ENCODE measurements at regions of chr10 and their contacts with region 1.

Region 1: DNA sequence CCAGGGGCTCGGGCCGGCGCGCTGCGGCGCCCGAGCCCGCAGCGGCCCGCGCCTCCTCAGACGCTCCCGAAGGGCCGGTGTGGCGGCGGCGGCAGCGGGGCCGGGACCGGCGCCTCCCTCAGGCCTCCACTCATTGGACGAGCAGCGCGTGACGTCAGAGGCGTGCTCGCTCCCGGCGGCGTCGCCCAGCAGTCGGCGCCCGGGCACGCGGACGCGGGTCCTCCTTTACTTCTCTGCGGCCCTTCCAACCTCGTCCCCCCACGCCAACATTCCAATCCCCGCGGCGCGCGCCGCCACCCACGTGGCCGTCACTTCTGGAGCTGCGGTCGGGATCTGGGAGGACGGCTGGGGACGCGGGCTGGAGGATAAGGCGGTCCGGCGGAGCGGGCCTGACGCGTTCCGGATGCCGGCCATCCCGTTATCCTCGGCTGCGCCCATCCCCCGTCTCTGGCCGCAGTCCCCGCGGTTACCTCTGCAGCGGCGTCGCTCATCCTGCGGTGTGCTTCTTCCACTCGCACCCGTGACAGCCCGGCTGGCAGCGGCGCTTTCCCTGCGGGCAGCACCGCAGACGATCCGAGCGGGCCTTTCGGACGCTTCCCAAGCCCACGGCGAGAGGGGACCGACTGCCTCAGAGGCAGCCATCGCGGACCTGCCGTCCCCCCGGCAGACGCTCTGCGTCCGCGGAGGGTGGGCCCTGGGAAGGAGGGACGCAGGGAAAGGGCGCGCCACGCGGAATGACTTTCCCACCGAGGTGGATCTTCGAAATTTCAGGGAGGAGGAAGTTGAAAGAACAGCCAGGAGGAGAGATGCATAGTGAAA is at the start of gene PDZD8:
- DNase-seq: peak; percentile 84
- H3K4me3 Mint-ChIP-seq: peak within 1 kb of the TSS; percentile 90
- H3K27ac Mint-ChIP-seq: peak within 1 kb of the TSS; percentile 76
- H3K4me1 Mint-ChIP-seq: peaks cover 21% of the 10 kb centered on the region
- H3K27me3 Mint-ChIP-seq: peaks cover 38% of the 10 kb centered on the region
- total RNA-seq, gene PDZD8: 20.6 and 22.0 TPM in 2 replicates

Region 2: GRCh38 chr10:117312430-117312829 is 63.1 kb before region 1 on chr10:
- intact Hi-C with region 1: no loop called
- DNase-seq: no peak
- H3K4me3 Mint-ChIP-seq: no peak overlapping the region
- H3K27ac Mint-ChIP-seq: no peak overlapping the region
- H3K4me1 Mint-ChIP-seq: peaks cover 9% of the 10 kb centered on the region
- H3K27me3 Mint-ChIP-seq: no peaks in the 10 kb centered on the region

Region 3: DNA sequence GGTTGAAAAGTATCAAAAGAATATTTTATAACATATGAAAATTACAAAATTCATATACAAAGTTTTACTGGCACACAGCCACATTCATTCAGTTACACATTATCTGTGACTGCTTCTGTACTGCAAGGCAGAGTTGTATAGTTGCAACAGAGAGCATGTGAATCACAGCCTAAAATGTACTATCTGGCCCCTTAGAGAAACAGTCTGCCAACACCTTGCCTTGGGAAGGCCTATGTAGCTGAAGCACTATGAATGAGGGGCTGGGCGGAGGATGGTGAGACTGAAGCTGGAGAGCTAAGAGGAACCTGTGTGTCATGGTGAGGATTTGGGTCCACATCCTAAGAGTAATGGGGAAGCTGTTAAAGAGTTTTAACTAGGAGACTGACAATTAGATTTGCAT is 36.0 kb before region 1 on chr10:
- intact Hi-C with region 1: loop called (anchors 5 kb)
- DNase-seq: no peak
- H3K4me3 Mint-ChIP-seq: no peak overlapping the region
- H3K27ac Mint-ChIP-seq: no peak overlapping the region
- H3K4me1 Mint-ChIP-seq: peaks cover 14% of the 10 kb centered on the region
- H3K27me3 Mint-ChIP-seq: no peaks in the 10 kb centered on the region

Region 4: DNA sequence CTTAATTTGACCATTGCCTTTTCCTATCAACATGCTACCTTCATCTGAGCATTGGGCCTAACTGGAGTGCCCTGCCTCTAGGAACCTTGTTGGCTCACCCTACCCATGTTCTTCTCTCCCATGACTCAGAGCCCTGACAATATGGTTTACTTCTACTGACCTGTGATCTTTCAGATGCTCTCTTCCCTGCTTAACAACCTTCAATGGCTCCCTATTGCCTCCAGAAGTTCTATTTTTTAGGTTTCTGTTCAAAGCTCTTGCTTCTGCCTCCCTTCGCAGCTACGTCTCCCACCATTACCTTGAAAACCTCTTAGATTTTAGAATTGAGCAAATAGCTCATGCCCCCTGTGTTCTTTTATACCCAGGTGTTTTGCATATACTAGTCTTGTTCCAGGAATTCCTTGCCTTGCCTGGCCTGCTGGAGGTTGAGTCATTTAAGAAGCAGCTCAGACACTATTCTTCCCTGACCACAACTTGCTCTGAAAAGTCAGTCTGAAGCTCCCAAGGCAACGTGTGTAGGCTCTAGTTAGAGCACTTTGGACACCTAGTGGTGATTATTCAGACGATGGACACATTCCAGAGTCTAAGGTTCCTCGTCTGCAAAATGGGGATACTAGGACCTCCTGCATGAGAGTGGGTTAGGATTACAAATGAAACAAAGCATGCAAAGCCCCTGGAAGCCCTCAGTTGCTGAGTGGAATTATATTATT is 102.5 kb after region 1 on chr10:
- intact Hi-C with region 1: no loop called
- DNase-seq: no peak
- H3K4me3 Mint-ChIP-seq: no peak overlapping the region
- H3K27ac Mint-ChIP-seq: no peak overlapping the region
- H3K4me1 Mint-ChIP-seq: no peaks in the 10 kb centered on the region
- H3K27me3 Mint-ChIP-seq: peaks cover 6% of the 10 kb centered on the region

Region 5: GRCh38 chr10:117885206-117885829 is 509.7 kb after region 1 on chr10:
- intact Hi-C with region 1: no loop called
- DNase-seq: no peak
- H3K4me3 Mint-ChIP-seq: no peak overlapping the region
- H3K27ac Mint-ChIP-seq: no peak overlapping the region
- H3K4me1 Mint-ChIP-seq: no peaks in the 10 kb centered on the region
- H3K27me3 Mint-ChIP-seq: no peaks in the 10 kb centered on the region

Region 6: GRCh38 chr10:118046395-118047156 is 671.0 kb after region 1 on chr10 and contains the start of gene RAB11FIP2:
- intact Hi-C with region 1: loop called (anchors 2 kb)
- DNase-seq: peak; percentile 92
- H3K4me3 Mint-ChIP-seq: peak within 1 kb of the TSS; percentile 91
- H3K27ac Mint-ChIP-seq: peak within 1 kb of the TSS; percentile 76
- H3K4me1 Mint-ChIP-seq: peaks cover 23% of the 10 kb centered on the region
- H3K27me3 Mint-ChIP-seq: peaks cover 11% of the 10 kb centered on the region
- total RNA-seq, gene RAB11FIP2: 11.2 and 13.8 TPM in 2 replicates

Region 7: GRCh38 chr10:118341791-118342637 is 966.4 kb after region 1 on chr10 and contains the start of gene FAM204A:
- intact Hi-C with region 1: loop called (anchors 5 kb)
- DNase-seq: peak; percentile 95
- H3K4me3 Mint-ChIP-seq: peak within 1 kb of the TSS; percentile 94
- H3K27ac Mint-ChIP-seq: peak within 1 kb of the TSS; percentile 82
- H3K4me1 Mint-ChIP-seq: peaks cover 20% of the 10 kb centered on the region
- H3K27me3 Mint-ChIP-seq: peaks cover 3% of the 10 kb centered on the region
- total RNA-seq, gene FAM204A: 53.1 and 55.6 TPM in 2 replicates